ENCODE measurements at regions of chr2 and their contacts with region 1.

Region 1: GRCh38 chr2:230541934-230542380 is 126.0 kb downstream of the SP100 start:
- DNase-seq: peak; percentile 54
- ATAC-seq: peak; percentile 76
- H3K4me3 ChIP-seq: peak overlapping the region; percentile 21; the same call in 1 of the 2 replicates
- H3K27ac ChIP-seq: peak overlapping the region; percentile 41; the same call in 1 of the 2 replicates
- H3K4me1 ChIP-seq: peaks cover 53% of the 10 kb centered on the region
- H3K27me3 ChIP-seq: no peaks in the 10 kb centered on the region
- CTCF ChIP-seq: no peak
- EP300 ChIP-seq: peak; percentile 25 to 47; a peak in 2 of 4 replicates
- POLR2A ChIP-seq: no peak
- RAD21 ChIP-seq: 0 out of 2 replicates have a peak, but pooled peaks have one; percentile 4

Region 2: DNA sequence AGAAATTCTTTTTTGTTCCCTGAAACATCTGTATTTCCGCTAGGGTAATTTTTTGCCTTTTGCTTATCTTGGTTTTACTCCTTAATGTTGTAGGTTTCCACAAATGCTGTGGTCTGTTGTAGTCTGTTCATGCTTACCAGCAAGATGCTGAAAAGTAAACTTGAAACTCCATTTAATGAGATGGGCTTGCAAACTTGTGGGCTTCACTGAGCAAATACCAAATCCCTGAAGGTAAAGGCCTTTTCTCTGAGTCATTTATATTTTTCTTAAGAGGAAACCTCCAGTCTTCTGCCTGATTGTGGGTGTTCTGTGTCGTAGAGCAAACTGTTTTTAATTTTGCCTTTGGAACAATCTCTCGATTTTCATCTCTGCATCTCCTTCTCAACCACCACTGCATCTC is 307.1 kb before region 1 on chr2:
- CTCF ChIA-PET with region 1: no interaction called
- POLR2A ChIA-PET with region 1: no interaction called
- RAD21 ChIA-PET with region 1: no interaction called
- SMC1A ChIA-PET with region 1: no interaction called
- in situ Hi-C with region 1: no loop called
- intact Hi-C with region 1: no loop called
- DNase-seq: peak; percentile 58
- ATAC-seq: peak; percentile 77
- H3K4me3 ChIP-seq: no peak overlapping the region
- H3K27ac ChIP-seq: no peak overlapping the region
- H3K4me1 ChIP-seq: peaks cover 28% of the 10 kb centered on the region
- H3K27me3 ChIP-seq: no peaks in the 10 kb centered on the region
- CTCF ChIP-seq: no peak
- EP300 ChIP-seq: peak in 1 of 2 experiments; percentile 69; a peak in 1 of 4 replicates
- POLR2A ChIP-seq: no peak
- RAD21 ChIP-seq: no peak

Region 3: DNA sequence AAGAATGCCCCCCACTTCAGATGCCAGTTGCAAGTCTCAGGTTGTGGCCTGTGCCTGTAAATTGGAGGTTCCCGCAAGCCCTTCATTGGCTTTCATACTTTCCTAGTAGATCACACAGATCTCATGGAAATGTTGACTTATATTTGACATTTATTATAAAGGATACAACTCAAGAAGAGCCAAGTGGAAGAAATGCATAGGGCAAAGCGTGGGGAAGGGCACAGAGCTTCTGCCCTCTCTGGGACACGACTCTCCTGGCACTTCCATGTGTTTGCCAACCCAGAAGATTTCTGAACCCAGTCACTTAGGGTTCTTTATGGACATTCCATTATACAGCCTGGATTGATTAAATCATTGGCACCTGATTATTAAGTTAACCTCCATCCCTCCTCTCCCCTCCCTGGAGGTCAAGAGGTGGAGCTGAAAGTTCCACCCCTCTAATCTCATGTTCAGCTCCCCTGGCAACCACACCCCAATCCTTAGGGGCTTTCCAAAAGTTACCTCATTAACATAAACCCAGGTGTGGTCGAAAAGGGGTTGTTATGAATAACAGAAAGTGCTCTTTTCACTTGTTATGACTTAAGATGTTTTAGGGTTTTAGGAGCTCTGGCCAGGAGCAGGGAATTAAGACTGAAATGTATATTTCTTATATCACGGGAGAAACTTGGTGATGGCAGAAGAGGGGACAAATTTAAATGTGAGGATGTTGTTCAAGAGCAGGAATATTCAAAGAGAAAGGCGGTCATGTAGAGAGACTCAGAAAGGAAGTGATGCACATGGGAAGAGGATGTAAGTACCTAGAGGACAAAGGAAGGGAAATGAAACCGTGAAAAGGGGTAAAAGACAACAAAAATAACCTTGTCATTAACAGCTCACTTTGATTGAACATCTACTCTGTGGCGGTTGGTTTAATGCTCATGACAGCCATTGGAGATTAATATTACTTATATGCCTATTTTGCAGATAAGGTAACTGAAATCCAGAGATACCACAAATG is 94.2 kb before region 1 on chr2:
- CTCF ChIA-PET with region 1: no interaction called
- POLR2A ChIA-PET with region 1: no interaction called
- RAD21 ChIA-PET with region 1: no interaction called
- SMC1A ChIA-PET with region 1: interaction called, 10 read pairs
- in situ Hi-C with region 1: no loop called
- intact Hi-C with region 1: no loop called
- DNase-seq: peak; percentile 84
- ATAC-seq: peak; percentile 87
- H3K4me3 ChIP-seq: 0 out of 2 replicates have a peak overlapping the region, but pooled peaks have one; percentile 13
- H3K27ac ChIP-seq: peak overlapping the region; percentile 89
- H3K4me1 ChIP-seq: peaks cover 53% of the 10 kb centered on the region
- H3K27me3 ChIP-seq: no peaks in the 10 kb centered on the region
- CTCF ChIP-seq: no peak
- EP300 ChIP-seq: peak; percentile 80 to 84; a peak in 3 of 4 replicates
- POLR2A ChIP-seq: no peak
- RAD21 ChIP-seq: no peak

Region 4: GRCh38 chr2:230582851-230583283 is 40.9 kb after region 1 on chr2:
- CTCF ChIA-PET with region 1: no interaction called
- POLR2A ChIA-PET with region 1: interaction called, 3 read pairs
- RAD21 ChIA-PET with region 1: interaction called, 3 read pairs
- SMC1A ChIA-PET with region 1: interaction called, 19 read pairs
- in situ Hi-C with region 1: no loop called
- intact Hi-C with region 1: loop called (anchors 5 kb)
- DNase-seq: peak; percentile 88
- ATAC-seq: peak; percentile 76
- H3K4me3 ChIP-seq: peak overlapping the region; percentile 44; the same call in 1 of the 2 replicates
- H3K27ac ChIP-seq: peak overlapping the region; percentile 97
- H3K4me1 ChIP-seq: peaks cover 57% of the 10 kb centered on the region
- H3K27me3 ChIP-seq: no peaks in the 10 kb centered on the region
- CTCF ChIP-seq: no peak
- EP300 ChIP-seq: peak; percentile 76 to 77; a peak in 3 of 4 replicates
- POLR2A ChIP-seq: no peak
- RAD21 ChIP-seq: no peak

Measured in GM12878 (cell line).